Endothelial cell of umbilical vein (primary cell): ENCODE measurements at regions of chr5 and their contacts with region 1.

Region 1: GRCh38 chr5:82406205-82406773 is 128.1 kb upstream of the RPS23 start:
- DNase-seq: peak; percentile 100
- H3K4me3 ChIP-seq: peak overlapping the region in 1 of 3 experiments; percentile 1
- H3K27ac ChIP-seq: peak overlapping the region; percentile 99
- H3K4me1 ChIP-seq: peaks cover 28% of the 10 kb centered on the region
- H3K27me3 ChIP-seq: no peaks in the 10 kb centered on the region
- CTCF ChIP-seq: no peak
- POLR2A ChIP-seq: peak; percentile 65

Region 2: DNA sequence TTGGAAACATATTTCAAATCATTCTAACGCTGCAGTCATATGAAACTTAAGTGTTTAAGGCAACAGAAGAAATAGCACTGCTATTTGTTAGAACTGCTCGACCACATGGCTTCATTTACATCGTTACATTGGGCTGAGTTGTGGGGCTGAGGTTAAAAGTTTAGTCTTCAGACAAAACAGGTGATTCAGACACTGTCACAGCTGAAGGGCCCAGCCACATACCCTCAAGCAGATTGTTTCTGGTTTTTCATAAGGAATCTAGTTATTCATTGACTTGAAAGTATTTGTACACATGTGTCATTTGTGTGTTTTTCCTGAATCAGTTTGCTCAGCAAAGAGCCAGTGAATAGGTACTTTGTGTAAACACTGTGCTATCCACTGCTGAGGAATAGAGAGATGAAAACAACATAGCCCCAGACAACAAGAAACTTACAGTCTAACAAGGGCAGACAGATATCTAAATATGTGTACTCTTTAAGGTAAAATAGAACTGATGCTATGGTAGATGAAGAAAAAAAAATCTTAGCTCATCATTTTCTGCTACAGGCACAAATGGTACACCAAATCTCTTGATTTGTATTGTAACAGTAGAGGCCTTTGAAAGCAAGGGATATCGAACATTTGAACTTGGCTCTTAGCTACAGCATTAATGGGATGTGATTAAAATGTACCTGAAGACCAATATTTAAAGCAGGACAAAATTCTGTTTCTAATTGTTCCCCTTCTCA is 229.4 kb after region 1 on chr5:
- CTCF ChIA-PET with region 1: no interaction called
- POLR2A ChIA-PET with region 1: no interaction called
- dilution Hi-C with region 1: no loop called
- intact Hi-C with region 1: loop called (anchors 5 kb)
- DNase-seq: peak; percentile 44
- H3K4me3 ChIP-seq: no peak overlapping the region
- H3K27ac ChIP-seq: no peak overlapping the region
- H3K4me1 ChIP-seq: peaks cover 5% of the 10 kb centered on the region
- H3K27me3 ChIP-seq: no peaks in the 10 kb centered on the region
- CTCF ChIP-seq: no peak
- POLR2A ChIP-seq: no peak

Region 3: GRCh38 chr5:83583859-83584258 is 1177.6 kb after region 1 on chr5:
- CTCF ChIA-PET with region 1: no interaction called
- POLR2A ChIA-PET with region 1: no interaction called
- dilution Hi-C with region 1: no loop called
- intact Hi-C with region 1: loop called (anchors 5 kb)
- DNase-seq: peak; percentile 77
- H3K4me3 ChIP-seq: no peak overlapping the region
- H3K27ac ChIP-seq: no peak overlapping the region
- H3K4me1 ChIP-seq: peaks cover 26% of the 10 kb centered on the region
- H3K27me3 ChIP-seq: no peaks in the 10 kb centered on the region
- CTCF ChIP-seq: no peak
- POLR2A ChIP-seq: no peak